Common myeloid progenitor, CD34-positive (primary cell): ENCODE measurements at regions of chr13 and their contacts with region 1.

Region 1: DNA sequence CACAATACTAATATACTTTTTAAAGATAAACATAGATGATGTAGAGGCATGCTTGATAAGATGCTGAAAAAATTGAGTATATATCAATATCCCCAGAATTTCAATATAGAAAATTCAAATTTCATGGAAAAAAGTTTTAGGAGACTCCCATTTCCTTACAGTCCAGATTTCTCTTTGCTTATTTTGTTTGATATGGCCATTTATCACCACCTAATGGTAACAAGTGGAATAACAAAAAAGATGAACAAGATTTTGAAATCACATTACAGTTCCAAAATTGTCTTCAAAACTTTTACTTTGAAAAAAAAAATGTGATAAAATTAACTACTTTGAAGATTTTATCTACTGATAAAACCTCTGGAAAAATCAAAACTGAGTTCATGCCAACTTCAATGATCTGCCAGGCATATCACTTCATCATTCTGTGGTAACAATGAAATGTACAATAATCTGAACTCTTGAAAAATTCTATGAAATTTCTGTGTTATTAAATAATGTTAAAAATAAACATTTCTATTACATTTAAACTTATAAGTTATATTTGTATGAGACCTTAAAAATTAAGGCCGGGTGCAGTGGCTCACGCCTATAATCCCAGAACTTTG is 17.5 kb downstream of the MIPEP start:
- DNase-seq: peak; percentile 22 to 38 (median 32)
- H3K4me3 ChIP-seq: no peak overlapping the region
- H3K27ac ChIP-seq: no peak overlapping the region
- H3K4me1 ChIP-seq: peaks cover 0 to 2% (median 0%) of the 10 kb centered on the region in 4 experiments
- H3K27me3 ChIP-seq: no peaks in the 10 kb centered on the region

Region 2: DNA sequence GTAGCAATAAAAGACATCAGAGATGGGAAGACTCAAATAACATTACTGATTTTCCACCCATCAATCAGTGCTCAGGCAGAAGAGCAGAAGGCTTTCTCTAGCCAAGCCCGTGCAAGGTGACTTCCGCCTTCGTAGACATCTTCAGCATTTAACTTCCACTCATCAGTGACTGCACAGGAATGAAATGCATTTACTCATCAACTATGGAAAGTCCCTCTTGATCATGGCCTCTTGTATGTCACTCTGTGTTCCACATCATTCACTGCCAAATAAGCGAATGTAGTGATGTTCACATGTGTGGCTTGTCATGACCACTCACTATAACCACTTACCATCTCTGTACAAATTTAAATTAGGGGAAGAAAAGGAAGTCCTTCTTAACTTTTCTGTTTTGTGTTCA is 487.6 kb before region 1 on chr13:
- CTCF ChIA-PET with region 1: no interaction called
- POLR2A ChIA-PET with region 1: no interaction called
- DNase-seq: peak; percentile 22 to 55 (median 24)
- H3K4me3 ChIP-seq: no peak overlapping the region
- H3K27ac ChIP-seq: no peak overlapping the region
- H3K4me1 ChIP-seq: peaks cover 0 to 15% (median 8%) of the 10 kb centered on the region in 4 experiments
- H3K27me3 ChIP-seq: no peaks in the 10 kb centered on the region

Region 3: DNA sequence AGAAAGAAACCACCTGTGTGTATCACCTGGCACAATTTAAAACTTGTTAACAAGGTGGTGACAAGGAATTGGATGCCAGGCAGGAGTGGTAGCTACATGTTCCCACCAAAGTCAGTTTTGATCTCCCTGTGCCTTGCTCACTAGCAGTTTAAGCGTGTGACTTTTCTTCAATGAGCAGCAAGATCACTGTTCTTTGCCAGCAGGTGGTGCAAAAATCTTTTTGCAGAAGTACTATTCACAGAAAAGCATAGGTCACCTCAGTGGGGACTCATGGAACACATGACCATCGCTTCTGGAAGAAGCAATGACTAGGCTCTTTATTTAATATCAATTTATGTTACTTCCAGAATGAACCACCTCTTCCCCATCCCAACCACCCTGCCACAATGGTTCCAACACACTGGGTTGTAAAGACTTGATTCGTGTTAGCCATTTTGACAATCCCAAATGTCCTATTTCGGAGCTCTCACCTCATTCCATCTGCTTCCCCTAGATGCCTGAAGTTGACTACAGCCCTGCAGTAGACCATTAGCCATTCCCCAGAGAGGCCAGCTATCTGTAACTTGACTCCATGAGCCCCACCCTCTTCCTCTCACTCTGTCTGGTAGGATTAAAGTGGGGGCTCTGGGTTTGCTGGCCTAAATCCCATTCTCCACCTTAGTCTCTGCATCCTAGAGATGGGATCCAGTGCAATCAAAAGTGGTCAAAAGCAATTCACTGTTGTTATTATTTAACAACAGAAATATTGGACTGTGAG is 360.6 kb before region 1 on chr13:
- CTCF ChIA-PET with region 1: interaction called, 18 read pairs
- POLR2A ChIA-PET with region 1: no interaction called
- DNase-seq: peak; percentile 62 to 84 (median 82)
- H3K4me3 ChIP-seq: no peak overlapping the region
- H3K27ac ChIP-seq: no peak overlapping the region
- H3K4me1 ChIP-seq: no peaks in the 10 kb centered on the region
- H3K27me3 ChIP-seq: peaks cover 0 to 11% (median 6%) of the 10 kb centered on the region in 5 experiments

Region 4: GRCh38 chr13:23741879-23742510 is 129.7 kb before region 1 on chr13:
- CTCF ChIA-PET with region 1: no interaction called
- POLR2A ChIA-PET with region 1: no interaction called
- DNase-seq: no peak
- H3K4me3 ChIP-seq: no peak overlapping the region
- H3K27ac ChIP-seq: no peak overlapping the region
- H3K4me1 ChIP-seq: no peaks in the 10 kb centered on the region
- H3K27me3 ChIP-seq: no peaks in the 10 kb centered on the region

Region 5: DNA sequence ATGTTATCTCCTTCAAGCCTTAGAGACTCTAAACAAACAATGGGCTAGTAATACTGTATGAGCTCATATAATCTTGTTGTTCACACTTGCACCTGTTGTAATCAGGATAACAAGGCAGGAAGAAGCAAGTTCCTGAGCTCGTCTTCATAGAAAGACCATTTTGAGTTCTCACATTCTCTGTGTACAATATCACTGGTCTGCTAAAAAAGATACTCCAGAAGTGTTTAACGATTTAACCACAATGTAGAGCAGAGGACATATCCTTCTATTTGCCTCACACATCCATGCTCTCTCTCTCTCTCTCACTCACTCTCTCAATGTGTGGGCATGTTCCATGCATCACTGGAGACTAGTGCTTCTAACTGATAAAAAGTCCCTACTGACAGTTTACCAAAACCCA is 105.4 kb before region 1 on chr13:
- CTCF ChIA-PET with region 1: no interaction called
- POLR2A ChIA-PET with region 1: no interaction called
- DNase-seq: peak; percentile 12 to 71 (median 41)
- H3K4me3 ChIP-seq: no peak overlapping the region
- H3K27ac ChIP-seq: no peak overlapping the region
- H3K4me1 ChIP-seq: no peaks in the 10 kb centered on the region
- H3K27me3 ChIP-seq: no peaks in the 10 kb centered on the region